ENCODE measurements at regions of chr1 and their contacts with region 1.

Region 1: DNA sequence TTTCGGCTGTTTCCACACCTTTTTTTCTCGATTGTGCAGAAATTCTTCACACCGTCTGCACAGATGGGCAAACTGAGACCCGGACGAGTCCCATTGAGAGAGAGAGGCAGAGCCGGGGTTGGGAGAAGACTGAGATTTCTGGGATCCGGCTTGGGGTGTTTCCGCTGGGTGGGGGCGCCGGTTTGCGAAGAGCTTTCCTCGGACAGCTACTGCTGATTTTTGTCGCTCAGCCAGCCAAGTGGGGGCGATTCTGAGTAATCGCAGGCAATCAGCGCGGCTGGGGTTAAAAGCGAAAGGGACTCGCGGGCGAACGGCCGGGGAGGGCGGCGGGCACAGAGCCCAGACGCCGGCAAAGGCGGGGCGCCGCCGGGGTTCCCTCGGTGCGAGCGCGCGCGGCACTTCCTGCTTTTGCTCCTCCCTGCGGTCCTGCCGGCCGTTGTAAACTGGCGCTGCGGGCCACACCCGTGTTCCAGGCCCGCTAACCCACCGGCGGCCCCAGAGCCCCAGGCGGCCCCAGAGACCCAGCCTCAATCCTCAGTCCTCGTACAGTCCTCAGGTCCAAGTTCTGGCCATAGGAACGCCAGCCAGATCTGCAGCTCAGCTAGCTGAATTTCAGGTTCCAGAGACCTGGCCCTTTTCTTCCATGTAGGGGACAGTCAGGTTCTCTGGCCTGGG is 32.4 kb upstream of the JUN start:
- DNase-seq: peak; percentile 89
- ATAC-seq: peak; percentile 55
- H3K4me3 ChIP-seq: peak overlapping the region; percentile 90
- H3K27ac ChIP-seq: peak overlapping the region; percentile 89
- H3K4me1 ChIP-seq: peaks cover 59% of the 10 kb centered on the region
- H3K27me3 ChIP-seq: no peaks in the 10 kb centered on the region
- CTCF ChIP-seq: peak; percentile 11; the same call in 1 of the 2 replicates

Region 2: GRCh38 chr1:58633121-58633520 is 183.1 kb before region 1 on chr1:
- CTCF ChIA-PET with region 1: no interaction called
- POLR2A ChIA-PET with region 1: no interaction called
- intact Hi-C with region 1: no loop called
- DNase-seq: no peak
- ATAC-seq: no peak
- H3K4me3 ChIP-seq: no peak overlapping the region
- H3K27ac ChIP-seq: no peak overlapping the region
- H3K4me1 ChIP-seq: no peaks in the 10 kb centered on the region
- H3K27me3 ChIP-seq: no peaks in the 10 kb centered on the region
- CTCF ChIP-seq: no peak

Region 3: DNA sequence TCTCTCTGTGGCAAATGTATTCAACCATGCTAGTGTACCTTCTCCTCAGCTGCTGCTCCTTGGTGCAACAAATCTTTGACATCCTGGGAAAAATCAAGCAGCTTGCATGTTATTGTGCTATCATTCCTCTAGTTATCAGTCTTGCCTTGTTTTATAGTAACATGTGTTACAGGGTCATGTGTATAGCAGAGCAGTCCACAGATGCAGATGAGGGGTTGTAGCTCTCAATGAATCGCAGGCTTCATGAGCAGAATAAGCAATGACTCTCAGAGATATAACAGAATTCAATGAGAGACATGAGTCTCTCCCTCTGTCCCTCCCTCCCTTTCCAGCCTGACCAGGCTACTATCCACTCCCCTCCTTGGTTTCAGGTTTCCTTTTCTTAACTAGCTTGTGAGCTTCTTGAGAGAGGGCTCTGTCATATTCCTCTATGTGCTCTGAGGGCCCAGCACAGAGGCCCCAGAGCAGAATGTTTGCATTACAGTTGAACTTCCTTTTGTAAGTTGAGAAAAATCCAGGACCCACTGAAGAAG is 17.2 kb before region 1 on chr1:
- CTCF ChIA-PET with region 1: no interaction called
- POLR2A ChIA-PET with region 1: no interaction called
- intact Hi-C with region 1: no loop called
- DNase-seq: no peak
- ATAC-seq: no peak
- H3K4me3 ChIP-seq: no peak overlapping the region
- H3K27ac ChIP-seq: no peak overlapping the region
- H3K4me1 ChIP-seq: no peaks in the 10 kb centered on the region
- H3K27me3 ChIP-seq: no peaks in the 10 kb centered on the region
- CTCF ChIP-seq: no peak

Region 4: GRCh38 chr1:58848818-58849411 is 32.7 kb after region 1 on chr1:
- CTCF ChIA-PET with region 1: no interaction called
- POLR2A ChIA-PET with region 1: interaction called, 5 read pairs
- intact Hi-C with region 1: loop called (anchors 1 kb)
- DNase-seq: peak; percentile 99
- ATAC-seq: peak; percentile 94
- H3K4me3 ChIP-seq: peak overlapping the region; percentile 34; the same call in 1 of the 2 replicates
- H3K27ac ChIP-seq: peak overlapping the region; percentile 94
- H3K4me1 ChIP-seq: peaks cover 44% of the 10 kb centered on the region
- H3K27me3 ChIP-seq: no peaks in the 10 kb centered on the region
- CTCF ChIP-seq: no peak

Region 5: DNA sequence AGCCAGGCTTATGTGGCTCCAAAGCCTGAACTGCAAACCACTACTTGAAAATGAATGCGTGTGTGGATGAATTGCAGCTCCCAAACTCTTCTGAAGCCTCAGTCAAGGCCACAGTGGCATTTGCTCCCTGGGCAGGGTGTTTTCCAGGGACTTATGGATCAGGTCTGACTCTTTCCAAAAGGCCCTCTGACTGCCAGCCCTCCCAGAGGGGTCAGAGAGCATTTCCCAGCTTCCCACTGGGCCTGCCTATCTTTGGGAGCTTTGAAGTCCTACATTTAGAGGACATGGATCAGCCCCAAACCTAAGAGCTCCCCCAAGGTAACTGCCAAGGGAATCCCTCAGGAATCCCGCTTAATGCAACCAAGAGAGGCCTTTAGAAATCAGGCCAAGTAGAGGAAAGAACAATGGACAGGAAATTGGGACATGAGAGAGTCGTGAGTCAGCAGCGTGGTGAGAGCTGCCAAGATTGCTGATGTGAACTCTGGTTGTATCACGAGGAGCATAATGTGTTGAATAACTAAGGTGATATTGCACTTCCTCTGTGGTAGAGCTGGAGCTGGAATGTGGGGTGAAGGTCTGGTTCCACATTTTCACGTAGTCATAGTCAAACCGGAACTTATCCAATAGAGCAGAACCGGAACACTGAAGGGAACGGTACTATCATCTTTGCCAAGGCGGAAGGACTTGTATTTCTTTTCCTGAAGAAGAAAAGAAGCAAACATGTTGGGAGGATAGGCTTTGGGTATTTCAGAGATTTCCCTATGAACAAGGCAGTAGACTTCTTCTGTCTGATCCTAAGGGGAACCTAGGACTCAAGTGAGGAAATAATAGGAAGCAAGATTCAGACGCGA is 67.1 kb after region 1 on chr1:
- CTCF ChIA-PET with region 1: no interaction called
- POLR2A ChIA-PET with region 1: interaction called, 3 read pairs
- intact Hi-C with region 1: loop called (anchors 1 kb)
- DNase-seq: peak; percentile 98
- ATAC-seq: peak; percentile 79
- H3K4me3 ChIP-seq: no peak overlapping the region
- H3K27ac ChIP-seq: peak overlapping the region; percentile 83
- H3K4me1 ChIP-seq: peaks cover 55% of the 10 kb centered on the region
- H3K27me3 ChIP-seq: no peaks in the 10 kb centered on the region
- CTCF ChIP-seq: no peak

Region 6: GRCh38 chr1:58903514-58904298 is 87.5 kb after region 1 on chr1:
- CTCF ChIA-PET with region 1: interaction called, 6 read pairs
- POLR2A ChIA-PET with region 1: no interaction called
- intact Hi-C with region 1: loop called (anchors 2 kb)
- DNase-seq: peak; percentile 87
- ATAC-seq: peak; percentile 86
- H3K4me3 ChIP-seq: peak overlapping the region; percentile 78
- H3K27ac ChIP-seq: peak overlapping the region; percentile 92
- H3K4me1 ChIP-seq: peaks cover 30% of the 10 kb centered on the region
- H3K27me3 ChIP-seq: no peaks in the 10 kb centered on the region
- CTCF ChIP-seq: no peak

Region 7: GRCh38 chr1:58908561-58909560 is 92.7 kb after region 1 on chr1:
- CTCF ChIA-PET with region 1: interaction called, 6 read pairs
- POLR2A ChIA-PET with region 1: no interaction called
- intact Hi-C with region 1: loop called (anchors 2 kb)
- DNase-seq: peak; percentile 90
- ATAC-seq: peak; percentile 78
- H3K4me3 ChIP-seq: no peak overlapping the region
- H3K27ac ChIP-seq: peak overlapping the region; percentile 36
- H3K4me1 ChIP-seq: peaks cover 28% of the 10 kb centered on the region
- H3K27me3 ChIP-seq: no peaks in the 10 kb centered on the region
- CTCF ChIP-seq: no peak